Heart left ventricle (tissue), 16 donors: ENCODE measurements at regions of chr2 and their contacts with region 1.

Region 1: DNA sequence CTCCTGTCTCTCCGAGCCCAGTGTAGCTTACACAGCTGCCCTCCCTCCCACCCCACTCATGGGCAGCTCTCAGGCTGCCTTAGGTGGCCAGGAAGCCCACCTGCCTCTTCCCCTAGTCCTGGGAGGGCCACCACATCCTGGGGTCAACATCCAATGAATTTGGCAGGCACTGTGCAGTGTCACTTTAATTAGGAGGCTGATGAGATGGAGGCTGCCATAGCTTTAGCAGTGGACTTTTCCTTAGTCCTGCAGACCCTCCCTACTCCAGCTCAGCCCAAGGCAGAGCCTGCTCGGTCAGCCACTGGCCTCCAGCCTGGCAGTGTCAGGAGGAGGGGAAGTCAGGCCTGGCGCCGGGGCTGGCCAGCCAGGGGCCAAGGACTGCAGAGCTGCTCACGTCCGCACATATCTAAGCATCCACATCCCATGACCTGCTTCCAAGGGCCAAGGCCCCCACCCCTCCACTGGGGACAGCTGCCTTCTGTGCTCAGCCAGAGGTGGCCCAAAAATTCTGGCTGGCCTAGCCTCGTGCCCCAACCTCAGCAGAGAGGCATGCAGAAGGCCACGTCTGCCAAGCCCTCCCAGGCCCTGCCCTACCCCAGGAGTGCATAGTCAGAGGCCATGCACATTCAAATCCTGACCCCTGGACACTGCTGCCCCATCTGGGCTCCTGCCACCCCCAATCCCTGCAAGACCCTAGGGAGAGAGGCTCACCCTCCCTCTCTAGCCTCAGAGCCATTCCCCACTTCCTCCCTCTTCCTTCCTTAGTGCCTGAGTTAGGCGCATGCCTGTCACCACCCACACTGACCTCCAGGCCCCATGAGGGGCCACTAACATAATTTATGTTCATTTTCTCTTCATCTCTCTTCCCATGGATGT is 33.1 kb downstream of the ADRA2B start:
- DNase-seq: peak; percentile 31 to 81 (median 57)
- ATAC-seq: peak; percentile 61 to 91 (median 78)
- H3K4me3 ChIP-seq: no peak overlapping the region
- H3K27ac ChIP-seq: peak overlapping the region; percentile 47 to 85 (median 78)
- H3K4me1 ChIP-seq: peaks cover 6 to 41% (median 25%) of the 10 kb centered on the region in 12 donors
- H3K27me3 ChIP-seq: no peaks in the 10 kb centered on the region
- CTCF ChIP-seq: no peak
- POLR2A ChIP-seq: no peak

Region 2: DNA sequence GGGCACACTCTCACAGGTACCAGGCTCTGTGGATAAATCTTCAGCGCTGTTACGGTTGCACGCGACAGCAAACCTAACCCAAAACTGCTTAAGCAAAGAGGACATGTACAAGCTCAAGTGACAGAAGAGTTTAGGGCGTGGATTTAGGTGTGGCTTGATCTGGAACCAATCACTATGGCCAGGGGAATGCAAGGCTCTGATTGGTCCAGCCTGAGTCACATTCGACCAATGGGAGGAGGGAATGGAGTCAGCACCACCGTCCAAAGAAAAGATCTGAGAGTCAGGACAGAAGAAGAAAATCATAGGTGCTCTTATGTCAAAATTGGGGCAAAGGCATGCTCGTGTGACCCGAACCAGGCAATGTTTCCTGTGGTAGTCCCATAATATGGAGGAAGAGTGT is 352.5 kb before region 1 on chr2:
- intact Hi-C with region 1: no loop called
- DNase-seq: no peak
- ATAC-seq: no peak
- H3K4me3 ChIP-seq: no peak overlapping the region
- H3K27ac ChIP-seq: no peak overlapping the region
- H3K4me1 ChIP-seq: no peaks in the 10 kb centered on the region
- H3K27me3 ChIP-seq: peaks cover 0 to 7% (median 0%) of the 10 kb centered on the region in 9 donors
- CTCF ChIP-seq: no peak
- POLR2A ChIP-seq: no peak

Region 3: GRCh38 chr2:96111822-96112510 is 28.7 kb after region 1 on chr2:
- intact Hi-C with region 1: loop called in 1 of 10 experiments (anchors 2 kb)
- DNase-seq: peak in 2 of 5 donors; percentile 15 to 30
- ATAC-seq: no peak
- H3K4me3 ChIP-seq: no peak overlapping the region
- H3K27ac ChIP-seq: no peak overlapping the region
- H3K4me1 ChIP-seq: peaks cover 0 to 54% (median 31%) of the 10 kb centered on the region in 12 donors
- H3K27me3 ChIP-seq: peaks cover 0 to 18% (median 5%) of the 10 kb centered on the region in 9 donors
- CTCF ChIP-seq: no peak
- POLR2A ChIP-seq: no peak